ENCODE measurements at regions of chr19 and their contacts with region 1.

Region 1: DNA sequence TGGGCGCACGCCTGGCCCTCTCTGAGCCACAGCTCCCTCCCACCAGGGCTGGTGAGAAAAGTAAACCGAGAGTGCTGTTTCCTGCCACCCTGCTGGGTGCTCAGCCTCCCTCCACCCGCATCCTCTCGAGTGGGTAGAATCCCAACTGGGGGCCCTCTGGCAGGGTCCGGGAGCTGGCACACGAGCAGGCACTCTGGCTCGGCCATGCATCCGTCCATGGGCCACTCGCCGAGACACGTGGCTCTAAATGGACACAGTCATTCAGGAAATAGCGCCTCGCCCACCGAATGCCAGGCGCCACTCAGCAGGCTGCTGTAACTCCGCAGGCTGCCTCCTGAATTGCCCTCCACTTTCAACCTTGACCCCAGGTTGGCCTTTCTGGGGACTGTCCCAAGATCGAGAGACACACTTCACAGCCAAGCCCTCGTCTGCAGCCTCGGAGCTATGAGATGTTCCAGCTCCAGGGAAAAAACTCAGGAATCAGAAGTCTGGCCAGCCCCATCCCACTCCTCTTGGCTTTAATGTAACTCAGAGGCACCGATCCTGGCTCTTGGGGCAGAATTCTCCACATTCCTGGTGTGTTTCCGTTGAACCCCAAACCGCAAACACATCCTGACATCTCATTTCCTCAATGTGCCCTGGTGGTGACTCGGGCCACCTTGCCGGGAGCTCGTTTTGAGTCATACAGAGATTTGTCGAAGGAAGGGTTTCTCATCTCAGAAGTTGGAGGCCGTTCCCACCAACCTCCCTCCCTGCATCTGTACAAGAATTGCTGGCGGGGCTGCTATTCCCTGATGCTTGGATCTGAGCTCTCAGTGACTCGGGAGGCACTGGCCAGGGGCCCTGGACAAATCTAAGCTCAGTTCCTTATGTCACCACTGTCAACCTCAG is 14.1 kb downstream of the KLF2 start:
- DNase-seq: peak; percentile 64
- ATAC-seq: no peak
- H3K4me3 ChIP-seq: peak overlapping the region in 4 of 5 experiments; percentile 10 to 49 (median 29)
- H3K4me3 Mint-ChIP-seq: peak overlapping the region; percentile 83
- H3K27ac ChIP-seq: peak overlapping the region; percentile 27 to 39
- H3K27ac Mint-ChIP-seq: peak overlapping the region; percentile 87
- H3K4me1 ChIP-seq: peaks cover 53 to 71% of the 10 kb centered on the region in 2 donors
- H3K4me1 Mint-ChIP-seq: peaks cover 61% of the 10 kb centered on the region
- H3K27me3 ChIP-seq: no peaks in the 10 kb centered on the region
- H3K27me3 Mint-ChIP-seq: no peaks in the 10 kb centered on the region
- CTCF ChIP-seq: peak; percentile 14

Region 2: DNA sequence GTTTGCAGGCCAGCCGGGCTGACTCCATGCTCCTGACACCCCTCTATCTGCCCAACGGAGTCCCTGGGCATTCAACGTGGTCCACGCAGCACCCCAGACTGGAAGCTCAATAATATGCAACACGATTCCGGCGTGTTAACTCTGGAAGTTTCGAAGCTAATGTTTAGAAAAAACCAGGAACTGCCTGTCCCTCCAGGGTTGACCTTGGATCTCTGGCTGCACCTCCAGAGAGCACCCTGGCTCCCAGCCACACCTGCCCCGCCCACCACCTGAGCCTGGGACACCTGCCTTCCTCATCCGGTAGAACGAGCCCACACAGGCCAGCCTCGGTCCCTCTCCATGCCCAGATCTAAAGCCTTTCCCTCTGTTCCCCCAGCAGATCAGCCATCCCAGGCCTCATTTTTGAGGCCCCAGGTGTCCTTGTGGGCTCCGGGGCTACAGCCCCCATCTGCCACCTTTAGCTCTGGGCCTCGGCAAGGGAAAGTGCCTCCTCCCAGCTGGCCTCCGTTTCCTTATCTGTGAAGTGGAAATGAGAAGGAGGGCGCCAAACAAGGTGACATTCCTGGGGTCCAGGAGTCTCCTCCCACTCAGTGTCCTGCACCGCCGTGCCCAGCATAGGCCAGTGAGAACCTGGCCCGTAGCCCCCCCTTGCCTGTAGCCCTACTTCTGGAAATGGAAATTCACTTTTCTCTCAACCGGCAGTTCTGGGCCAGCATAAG is 24.6 kb after region 1 on chr19:
- CTCF ChIA-PET with region 1: interaction called, 16 read pairs
- POLR2A ChIA-PET with region 1: interaction called, 39 read pairs
- intact Hi-C with region 1: loop called (anchors 1 kb)
- DNase-seq: peak; percentile 3
- ATAC-seq: no peak
- H3K4me3 ChIP-seq: no peak overlapping the region
- H3K4me3 Mint-ChIP-seq: peak overlapping the region; percentile 19
- H3K27ac ChIP-seq: no peak overlapping the region
- H3K27ac Mint-ChIP-seq: peak overlapping the region; percentile 53
- H3K4me1 ChIP-seq: peaks cover 82 to 98% of the 10 kb centered on the region in 2 donors
- H3K4me1 Mint-ChIP-seq: peaks cover 83% of the 10 kb centered on the region
- H3K27me3 ChIP-seq: no peaks in the 10 kb centered on the region
- H3K27me3 Mint-ChIP-seq: no peaks in the 10 kb centered on the region
- CTCF ChIP-seq: no peak

Region 3: DNA sequence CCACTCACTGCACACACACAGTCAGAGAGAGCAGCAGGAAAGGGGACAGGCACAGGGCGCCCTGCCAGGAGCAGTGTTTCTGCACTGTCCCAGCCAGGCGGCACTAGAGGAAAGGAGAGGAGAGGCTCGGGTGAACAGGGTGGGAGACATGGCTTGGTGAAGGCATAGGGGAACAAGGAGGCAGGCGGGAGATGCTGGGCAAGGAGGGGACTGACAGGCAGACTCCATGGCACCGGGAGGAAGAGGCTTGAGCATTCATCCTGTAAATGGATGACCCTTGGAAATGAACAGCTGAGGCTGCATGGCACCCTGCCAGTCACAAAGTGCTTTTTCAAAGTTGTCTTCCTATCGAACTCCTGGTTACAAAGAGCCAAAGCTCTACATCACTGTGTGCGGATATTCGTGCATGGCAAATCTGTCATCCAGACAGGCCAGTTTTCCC is 266.9 kb after region 1 on chr19:
- CTCF ChIA-PET with region 1: no interaction called
- POLR2A ChIA-PET with region 1: no interaction called
- intact Hi-C with region 1: no loop called
- DNase-seq: no peak
- ATAC-seq: no peak
- H3K4me3 ChIP-seq: no peak overlapping the region
- H3K4me3 Mint-ChIP-seq: peak overlapping the region; percentile 3
- H3K27ac ChIP-seq: peak overlapping the region in 1 of 2 donors; percentile 50
- H3K27ac Mint-ChIP-seq: peak overlapping the region; percentile 11
- H3K4me1 ChIP-seq: peaks cover 38 to 59% of the 10 kb centered on the region in 2 donors
- H3K4me1 Mint-ChIP-seq: peaks cover 66% of the 10 kb centered on the region
- H3K27me3 ChIP-seq: no peaks in the 10 kb centered on the region
- H3K27me3 Mint-ChIP-seq: no peaks in the 10 kb centered on the region
- CTCF ChIP-seq: no peak